ENCODE measurements at regions of chr9 and their contacts with region 1.

Region 1: GRCh38 chr9:126301985-126302603 is 24.5 kb upstream of the MVB12B start:
- DNase-seq: peak; percentile 80
- H3K4me3 ChIP-seq: no peak overlapping the region
- H3K27ac ChIP-seq: no peak overlapping the region
- H3K4me1 ChIP-seq: no peaks in the 10 kb centered on the region
- H3K27me3 ChIP-seq: no peaks in the 10 kb centered on the region

Region 2: GRCh38 chr9:126398403-126399058 is 96.4 kb after region 1 on chr9:
- in situ Hi-C with region 1: loop called (anchors 5 kb)
- DNase-seq: peak; percentile 75
- H3K4me3 ChIP-seq: no peak overlapping the region
- H3K27ac ChIP-seq: no peak overlapping the region
- H3K4me1 ChIP-seq: peaks cover 6% of the 10 kb centered on the region; the same call in 1 of the 2 replicates
- H3K27me3 ChIP-seq: no peaks in the 10 kb centered on the region

Region 3: GRCh38 chr9:126490871-126491567 is 188.9 kb after region 1 on chr9:
- in situ Hi-C with region 1: loop called (anchors 10 kb)
- DNase-seq: peak; percentile 81
- H3K4me3 ChIP-seq: no peak overlapping the region
- H3K27ac ChIP-seq: no peak overlapping the region
- H3K4me1 ChIP-seq: no peaks in the 10 kb centered on the region
- H3K27me3 ChIP-seq: no peaks in the 10 kb centered on the region